ENCODE measurements at regions of chr6 and their contacts with region 1.

Region 1: GRCh38 chr6:119313937-119314884 is 35.4 kb downstream of the MAN1A1 start:
- DNase-seq: peak; percentile 45
- H3K4me3 Mint-ChIP-seq: peak overlapping the region; percentile 73
- H3K27ac Mint-ChIP-seq: peak overlapping the region; percentile 99
- H3K4me1 Mint-ChIP-seq: peaks cover 76% of the 10 kb centered on the region
- H3K27me3 Mint-ChIP-seq: no peaks in the 10 kb centered on the region

Region 2: DNA sequence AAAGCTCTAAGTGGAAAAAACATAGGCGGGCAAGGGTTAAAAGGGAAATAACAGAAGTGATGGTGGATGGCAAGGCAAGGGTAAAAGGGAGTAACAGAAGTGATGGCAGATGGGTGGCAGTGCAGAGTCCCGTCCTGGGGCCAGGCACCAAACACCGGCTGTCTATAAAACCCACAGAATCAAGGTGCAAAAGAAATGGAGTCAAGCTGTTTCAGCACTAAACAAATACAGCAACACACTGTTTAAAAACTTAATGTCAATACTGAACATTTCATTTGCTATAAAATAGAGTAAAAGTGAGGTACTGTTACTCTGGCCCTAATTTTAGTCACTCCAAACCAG is 52.3 kb before region 1 on chr6:
- intact Hi-C with region 1: loop called (anchors 1 kb)
- DNase-seq: no peak
- H3K4me3 Mint-ChIP-seq: peak overlapping the region; percentile 46
- H3K27ac Mint-ChIP-seq: peak overlapping the region; percentile 91
- H3K4me1 Mint-ChIP-seq: peaks cover 50% of the 10 kb centered on the region
- H3K27me3 Mint-ChIP-seq: no peaks in the 10 kb centered on the region

Region 3: DNA sequence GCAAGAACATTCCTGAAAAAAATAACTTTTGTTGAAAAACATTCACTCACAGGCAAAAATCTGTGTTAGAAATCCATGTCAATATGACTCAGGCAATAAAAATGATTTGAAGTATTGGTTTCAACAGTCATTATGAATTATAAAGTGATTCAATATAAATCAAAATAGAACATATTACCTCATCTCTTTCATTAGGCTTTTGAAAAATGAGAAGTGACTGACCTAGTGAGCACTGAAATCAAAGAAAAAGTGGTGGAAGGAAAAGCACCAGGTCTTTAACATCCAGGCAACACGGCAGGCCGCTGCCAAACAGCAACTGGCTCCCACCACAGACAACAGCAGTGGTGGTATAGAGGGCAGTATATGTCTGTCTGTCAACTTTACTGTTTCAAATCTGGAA is 33.5 kb before region 1 on chr6:
- intact Hi-C with region 1: no loop called
- DNase-seq: no peak
- H3K4me3 Mint-ChIP-seq: no peak overlapping the region
- H3K27ac Mint-ChIP-seq: no peak overlapping the region
- H3K4me1 Mint-ChIP-seq: peaks cover 16% of the 10 kb centered on the region
- H3K27me3 Mint-ChIP-seq: no peaks in the 10 kb centered on the region

Region 4: DNA sequence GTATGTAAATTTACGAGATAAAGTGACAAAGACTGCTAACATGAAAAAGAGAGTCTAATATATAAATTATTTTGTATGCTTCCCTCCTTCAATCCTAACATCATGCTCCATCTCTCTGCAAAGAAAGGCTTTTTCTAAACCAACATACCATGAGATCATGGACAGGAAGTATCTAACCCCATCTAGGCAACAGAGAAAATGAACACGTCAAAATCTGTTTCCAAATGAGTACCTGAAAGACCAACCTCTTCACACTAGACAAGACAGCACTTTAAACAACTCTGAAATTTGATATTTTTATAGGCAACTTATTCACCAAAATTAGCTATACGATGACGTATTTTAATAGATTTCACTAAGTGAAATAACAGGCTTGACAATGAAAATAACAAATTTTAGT is 19.2 kb before region 1 on chr6:
- intact Hi-C with region 1: loop called (anchors 1 kb)
- DNase-seq: no peak
- H3K4me3 Mint-ChIP-seq: peak overlapping the region; percentile 16
- H3K27ac Mint-ChIP-seq: peak overlapping the region; percentile 24
- H3K4me1 Mint-ChIP-seq: peaks cover 32% of the 10 kb centered on the region
- H3K27me3 Mint-ChIP-seq: no peaks in the 10 kb centered on the region